ENCODE measurements at regions of chr5 and their contacts with region 1.

Region 1: DNA sequence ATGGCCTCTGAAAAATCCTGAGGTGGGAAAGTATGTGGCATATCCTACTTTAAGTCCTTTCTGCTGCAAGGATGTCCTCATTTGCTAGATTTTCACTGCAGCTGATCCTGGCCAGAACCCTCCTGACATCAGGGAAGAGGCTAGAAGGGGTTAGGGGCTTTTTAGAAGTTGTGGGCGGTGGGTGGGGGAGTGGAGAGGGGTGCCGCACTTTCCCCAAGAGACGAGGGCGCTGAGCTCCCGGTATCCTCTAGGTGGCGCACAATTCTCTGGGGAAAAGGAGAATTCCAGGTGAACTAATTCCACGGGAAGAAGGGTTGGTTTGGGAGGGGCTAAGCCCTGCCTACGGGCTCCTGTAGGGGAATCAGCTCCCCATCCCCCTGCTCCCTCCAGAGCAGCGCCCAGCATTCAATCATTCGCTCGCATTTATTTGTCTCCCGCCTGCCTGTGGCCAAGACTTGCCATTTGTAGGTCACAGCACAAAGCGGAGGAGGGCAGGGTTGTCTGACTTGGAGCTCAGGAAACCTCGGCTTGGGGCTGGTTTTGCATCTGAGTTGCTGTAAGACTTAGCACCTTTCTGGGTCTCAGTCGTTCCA is 42.9 kb upstream of the HAND1 start:
- DNase-seq: peak; percentile 91
- ATAC-seq: peak; percentile 95
- H3K4me3 Mint-ChIP-seq: peak overlapping the region; percentile 77
- H3K27ac Mint-ChIP-seq: peak overlapping the region; percentile 92
- H3K4me1 Mint-ChIP-seq: peaks cover 22% of the 10 kb centered on the region
- H3K27me3 Mint-ChIP-seq: peaks cover 32% of the 10 kb centered on the region
- CTCF ChIP-seq: peak; percentile 79

Region 2: GRCh38 chr5:154421868-154422267 is 99.1 kb before region 1 on chr5:
- CTCF ChIA-PET with region 1: interaction called, 13 read pairs
- POLR2A ChIA-PET with region 1: no interaction called
- DNase-seq: peak; percentile 65
- ATAC-seq: peak; percentile 86
- H3K4me3 Mint-ChIP-seq: no peak overlapping the region
- H3K27ac Mint-ChIP-seq: no peak overlapping the region
- H3K4me1 Mint-ChIP-seq: peaks cover 11% of the 10 kb centered on the region
- H3K27me3 Mint-ChIP-seq: no peaks in the 10 kb centered on the region
- CTCF ChIP-seq: peak; percentile 48; the same call in 1 of the 2 replicates

Region 3: DNA sequence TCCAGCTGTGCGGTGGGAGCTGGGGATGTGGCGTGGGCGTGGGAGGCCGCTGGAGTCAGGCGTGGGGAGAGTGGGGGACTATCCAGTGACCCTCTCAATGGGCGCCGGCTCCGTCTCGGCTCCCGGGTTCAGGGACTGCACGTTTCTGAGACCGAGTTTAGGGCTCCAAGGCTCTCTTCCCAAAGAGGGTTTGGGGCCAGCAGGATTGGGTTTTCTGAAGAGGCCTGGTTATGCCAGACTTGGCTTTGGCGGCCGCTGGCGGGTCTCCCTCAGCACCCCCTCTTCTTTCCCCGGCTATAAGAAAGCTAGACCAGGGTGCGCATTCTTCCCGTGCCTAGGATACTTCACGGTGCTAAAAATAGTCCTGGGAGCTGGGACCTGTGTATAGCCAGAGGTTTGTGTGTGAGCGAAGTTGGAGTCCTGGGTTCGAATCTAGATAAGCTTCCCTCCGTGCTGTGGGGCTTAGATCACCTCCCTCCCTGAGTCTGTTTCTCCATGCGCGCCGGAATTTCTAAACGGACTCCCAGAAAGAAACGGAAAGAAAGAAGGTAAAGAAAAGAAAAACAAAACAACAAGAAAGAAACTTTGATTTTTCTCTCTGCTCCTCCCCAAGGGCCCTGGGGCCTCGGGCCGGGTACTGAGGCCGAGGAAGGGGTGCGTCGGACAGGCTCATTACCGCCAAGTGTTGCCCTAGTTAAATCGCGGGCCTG is 47.9 kb before region 1 on chr5:
- CTCF ChIA-PET with region 1: interaction called, 31 read pairs
- POLR2A ChIA-PET with region 1: no interaction called
- DNase-seq: peak; percentile 45
- ATAC-seq: peak; percentile 1; the same call in 1 of the 2 replicates
- H3K4me3 Mint-ChIP-seq: peak overlapping the region; percentile 63
- H3K27ac Mint-ChIP-seq: no peak overlapping the region; the same call in 1 of the 2 replicates
- H3K4me1 Mint-ChIP-seq: peaks cover 52% of the 10 kb centered on the region
- H3K27me3 Mint-ChIP-seq: peaks cover 100% of the 10 kb centered on the region
- CTCF ChIP-seq: no peak

Region 4: GRCh38 chr5:154534457-154535050 is 13.6 kb after region 1 on chr5:
- CTCF ChIA-PET with region 1: interaction called, 12 read pairs
- POLR2A ChIA-PET with region 1: no interaction called
- DNase-seq: no peak
- ATAC-seq: no peak
- H3K4me3 Mint-ChIP-seq: no peak overlapping the region
- H3K27ac Mint-ChIP-seq: no peak overlapping the region
- H3K4me1 Mint-ChIP-seq: peaks cover 7% of the 10 kb centered on the region
- H3K27me3 Mint-ChIP-seq: no peaks in the 10 kb centered on the region
- CTCF ChIP-seq: no peak

Region 5: DNA sequence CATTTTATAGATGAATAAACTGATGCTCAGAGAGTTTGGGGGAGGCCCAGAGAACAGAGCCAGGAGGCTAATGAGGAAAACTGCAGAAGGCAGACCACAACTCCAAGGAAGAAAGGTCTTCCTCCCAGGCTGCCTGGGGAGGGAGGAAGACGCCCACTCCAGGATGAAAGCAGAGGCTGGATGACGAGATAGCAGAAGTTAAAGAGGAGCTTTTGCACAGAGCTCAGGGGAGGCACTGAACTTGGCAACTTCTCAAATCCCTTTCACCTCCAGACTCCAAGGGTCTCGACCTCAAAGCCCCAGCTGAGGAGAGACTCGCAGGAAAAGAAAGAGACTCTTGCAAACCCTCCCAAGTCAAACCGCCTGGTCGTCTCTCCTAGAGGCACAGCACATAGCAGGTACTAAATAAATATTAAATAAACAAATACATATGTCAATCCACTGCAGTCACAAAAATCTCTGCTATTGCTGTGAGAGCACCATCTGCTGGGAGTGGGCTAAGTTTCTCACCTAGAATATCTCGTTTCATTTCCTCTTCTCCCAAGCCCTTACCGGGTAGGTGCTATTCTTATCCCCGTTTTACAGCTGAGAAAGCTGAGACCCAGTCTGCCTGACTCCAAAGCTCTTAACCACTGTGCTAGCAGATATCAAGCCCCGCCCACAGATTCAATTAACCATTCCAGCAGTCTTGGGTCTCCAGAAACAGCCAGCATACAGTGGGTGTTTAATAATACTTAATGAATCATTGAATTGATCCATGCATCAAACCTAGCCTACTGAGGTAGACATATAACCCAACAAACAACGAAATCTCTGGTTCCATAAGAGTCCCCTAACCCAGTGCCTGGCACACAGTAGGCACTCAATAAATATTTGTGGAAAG is 54.8 kb after region 1 on chr5:
- CTCF ChIA-PET with region 1: interaction called, 45 read pairs
- POLR2A ChIA-PET with region 1: no interaction called
- DNase-seq: no peak
- ATAC-seq: peak; percentile 23; the same call in 1 of the 2 replicates
- H3K4me3 Mint-ChIP-seq: no peak overlapping the region
- H3K27ac Mint-ChIP-seq: no peak overlapping the region
- H3K4me1 Mint-ChIP-seq: peaks cover 14% of the 10 kb centered on the region
- H3K27me3 Mint-ChIP-seq: peaks cover 4% of the 10 kb centered on the region
- CTCF ChIP-seq: no peak

Region 6: GRCh38 chr5:154627698-154628678 is 107.0 kb after region 1 on chr5:
- CTCF ChIA-PET with region 1: interaction called, 11 read pairs
- POLR2A ChIA-PET with region 1: no interaction called
- DNase-seq: no peak
- ATAC-seq: no peak
- H3K4me3 Mint-ChIP-seq: no peak overlapping the region
- H3K27ac Mint-ChIP-seq: no peak overlapping the region
- H3K4me1 Mint-ChIP-seq: peaks cover 2% of the 10 kb centered on the region; the same call in 1 of the 2 replicates
- H3K27me3 Mint-ChIP-seq: peaks cover 2% of the 10 kb centered on the region; the same call in 1 of the 2 replicates
- CTCF ChIP-seq: no peak

Region 7: GRCh38 chr5:154754460-154755360 is 233.8 kb after region 1 on chr5:
- CTCF ChIA-PET with region 1: no interaction called
- POLR2A ChIA-PET with region 1: no interaction called
- DNase-seq: peak; percentile 100
- ATAC-seq: peak; percentile 88
- H3K4me3 Mint-ChIP-seq: peak overlapping the region; percentile 66
- H3K27ac Mint-ChIP-seq: peak overlapping the region; percentile 95
- H3K4me1 Mint-ChIP-seq: peaks cover 40% of the 10 kb centered on the region
- H3K27me3 Mint-ChIP-seq: no peaks in the 10 kb centered on the region
- CTCF ChIP-seq: no peak